ENCODE measurements at regions of chr11 and their contacts with region 1.

Region 1: DNA sequence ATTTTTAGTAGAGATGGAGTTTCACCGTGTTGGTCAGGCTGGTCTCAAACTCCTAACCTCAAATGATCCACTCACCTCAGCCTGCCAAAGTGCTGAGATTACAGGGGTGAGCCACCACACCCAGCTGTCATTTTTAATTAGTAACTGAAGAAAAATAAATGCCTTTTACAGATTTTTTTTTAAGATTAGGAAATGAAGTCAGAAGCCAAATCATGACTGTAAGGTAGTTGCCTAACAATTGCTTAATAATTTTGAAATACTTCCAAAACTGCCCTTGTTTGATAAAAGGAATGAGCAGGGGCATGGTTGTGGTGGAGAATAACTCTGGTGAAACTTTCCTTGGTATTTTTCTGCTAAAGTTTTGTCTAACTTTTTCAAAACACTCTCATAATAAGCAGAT is 98.9 kb upstream of the SLC5A12 start:
- DNase-seq: no peak
- H3K4me3 ChIP-seq: no peak overlapping the region
- H3K4me3 Mint-ChIP-seq: no peak overlapping the region
- H3K27ac ChIP-seq: no peak overlapping the region
- H3K27ac Mint-ChIP-seq: no peak overlapping the region
- H3K4me1 ChIP-seq: no peaks in the 10 kb centered on the region
- H3K4me1 Mint-ChIP-seq: no peaks in the 10 kb centered on the region
- H3K27me3 ChIP-seq: no peaks in the 10 kb centered on the region
- H3K27me3 Mint-ChIP-seq: no peaks in the 10 kb centered on the region
- CTCF ChIP-seq: no peak

Region 2: DNA sequence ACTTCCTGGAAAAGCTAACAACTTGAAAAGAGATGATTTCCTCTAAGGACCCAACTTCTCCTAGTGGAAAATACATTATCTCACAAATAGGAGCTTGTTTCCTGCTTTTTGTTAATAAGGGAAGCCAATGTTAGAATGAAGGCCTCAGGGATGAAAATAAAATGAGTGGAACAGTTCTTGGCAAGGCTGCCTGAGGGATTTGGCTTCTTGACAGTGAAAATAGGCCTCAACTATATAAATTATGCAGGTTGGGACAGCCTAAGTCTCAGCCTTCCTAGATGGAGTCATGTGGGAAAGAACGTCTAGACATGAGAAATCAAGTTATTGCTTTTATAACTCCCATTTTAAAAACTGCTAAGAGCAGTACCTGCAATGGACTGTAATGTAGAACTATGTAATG is 80.4 kb after region 1 on chr11:
- intact Hi-C with region 1: no loop called
- DNase-seq: no peak
- H3K4me3 ChIP-seq: no peak overlapping the region
- H3K4me3 Mint-ChIP-seq: no peak overlapping the region
- H3K27ac ChIP-seq: no peak overlapping the region
- H3K27ac Mint-ChIP-seq: no peak overlapping the region
- H3K4me1 ChIP-seq: no peaks in the 10 kb centered on the region
- H3K4me1 Mint-ChIP-seq: no peaks in the 10 kb centered on the region
- H3K27me3 ChIP-seq: no peaks in the 10 kb centered on the region
- H3K27me3 Mint-ChIP-seq: no peaks in the 10 kb centered on the region
- CTCF ChIP-seq: no peak

Region 3: GRCh38 chr11:27904358-27905055 is 1083.8 kb after region 1 on chr11:
- intact Hi-C with region 1: loop called in 1 of 2 experiments (anchors 10 kb)
- DNase-seq: no peak
- H3K4me3 ChIP-seq: no peak overlapping the region
- H3K4me3 Mint-ChIP-seq: no peak overlapping the region
- H3K27ac ChIP-seq: no peak overlapping the region
- H3K27ac Mint-ChIP-seq: no peak overlapping the region
- H3K4me1 ChIP-seq: no peaks in the 10 kb centered on the region
- H3K4me1 Mint-ChIP-seq: peaks cover 4% of the 10 kb centered on the region
- H3K27me3 ChIP-seq: no peaks in the 10 kb centered on the region
- H3K27me3 Mint-ChIP-seq: peaks cover 0 to 5% (median 0%) of the 10 kb centered on the region in 3 donors
- CTCF ChIP-seq: no peak

Measured in CD14-positive monocyte (primary cell).